Activated CD4-positive, alpha-beta T cell treated with anti-CD3 and anti-CD28 coated beads for 36 hours (primary cell): ENCODE measurements at regions of chr6 and their contacts with region 1.

Region 1: DNA sequence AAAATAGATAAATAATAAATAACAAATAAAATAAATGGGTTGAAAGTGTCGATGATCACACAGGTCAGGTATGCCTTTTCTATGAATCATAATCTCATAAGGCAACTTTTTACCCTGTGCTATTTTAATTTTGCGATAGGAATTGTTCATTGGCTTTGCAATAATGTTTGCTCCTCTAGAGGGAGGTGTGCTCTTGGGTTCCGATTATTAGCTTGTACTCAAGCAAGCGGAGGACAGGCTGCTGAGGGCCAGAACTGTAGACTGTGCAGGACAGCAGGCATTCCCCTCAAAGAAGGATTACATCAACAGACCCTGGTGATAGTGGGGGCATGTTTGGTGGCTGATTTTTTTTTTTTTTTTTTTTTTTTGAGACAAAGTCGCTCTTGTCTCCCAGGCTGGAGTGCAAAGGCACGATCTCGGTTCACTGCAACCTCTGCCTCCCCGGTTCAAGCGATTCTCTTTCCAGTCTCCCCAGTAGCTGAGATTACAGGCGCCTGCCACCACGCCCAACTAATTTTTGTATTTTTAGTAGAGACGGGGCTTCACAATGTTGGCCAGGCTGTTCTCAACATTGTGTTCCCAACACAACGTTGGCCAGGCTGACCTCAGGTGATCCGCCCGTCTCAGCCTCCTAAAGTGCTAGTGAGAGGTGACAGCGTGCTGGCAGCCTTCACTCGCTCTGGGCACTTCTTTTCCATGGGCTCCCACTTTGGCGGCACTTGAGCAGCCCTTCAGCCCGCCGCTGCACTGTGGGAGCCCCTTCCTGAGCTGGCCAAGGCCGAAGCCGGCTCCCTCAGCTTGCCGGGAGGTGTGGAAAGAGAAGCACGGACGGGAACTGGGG is 35.6 kb downstream of the RIOK1 start:
- DNase-seq: no peak
- ATAC-seq: no peak
- H3K4me3 Mint-ChIP-seq: no peak overlapping the region
- H3K27ac Mint-ChIP-seq: no peak overlapping the region
- H3K4me1 Mint-ChIP-seq: no peaks in the 10 kb centered on the region
- H3K27me3 Mint-ChIP-seq: no peaks in the 10 kb centered on the region

Region 2: DNA sequence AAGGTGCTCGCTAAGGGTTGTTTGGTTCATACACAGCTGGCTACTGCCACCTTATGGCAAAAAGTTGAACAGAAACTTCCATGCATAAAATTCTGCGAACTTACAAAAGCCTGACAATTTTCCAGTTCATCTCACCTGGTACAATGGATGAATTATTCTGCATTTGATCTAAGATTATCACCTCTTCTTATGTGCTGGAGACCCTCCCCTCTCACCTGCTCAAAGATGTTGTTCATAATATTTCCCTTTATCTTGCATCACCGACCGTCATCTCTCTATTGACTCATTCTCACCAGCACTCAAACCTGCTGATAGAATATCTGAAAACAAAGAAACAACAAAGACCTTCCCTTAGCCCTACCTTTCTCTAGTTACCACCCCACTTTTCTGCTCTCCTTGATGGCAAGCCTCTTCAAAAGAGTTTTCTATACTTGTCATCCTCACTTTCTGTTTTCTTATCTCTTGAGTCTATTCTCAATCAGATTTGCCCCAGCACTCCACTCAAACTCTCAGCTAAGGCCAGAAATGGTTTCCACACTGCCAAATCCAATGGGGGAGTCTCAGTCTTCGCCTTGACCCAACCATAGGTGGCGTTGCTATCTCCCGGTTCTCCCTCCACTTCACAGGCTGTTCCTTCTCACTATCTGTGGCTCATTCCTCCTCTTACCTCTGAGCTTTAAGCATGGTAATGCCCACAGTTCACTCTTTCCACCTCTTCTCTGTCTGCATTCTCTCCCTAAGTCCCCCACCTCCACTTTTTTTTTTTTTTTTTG is 190.6 kb after region 1 on chr6:
- CTCF ChIA-PET with region 1: no interaction called
- POLR2A ChIA-PET with region 1: no interaction called
- intact Hi-C with region 1: loop called (anchors 1 to 10 kb)
- DNase-seq: peak; percentile 44
- ATAC-seq: peak; percentile 69
- H3K4me3 Mint-ChIP-seq: no peak overlapping the region
- H3K27ac Mint-ChIP-seq: no peak overlapping the region
- H3K4me1 Mint-ChIP-seq: peaks cover 17% of the 10 kb centered on the region
- H3K27me3 Mint-ChIP-seq: no peaks in the 10 kb centered on the region